Transverse colon (tissue), 4 donors: ENCODE measurements at regions of chr14 and their contacts with region 1.

Region 1: DNA sequence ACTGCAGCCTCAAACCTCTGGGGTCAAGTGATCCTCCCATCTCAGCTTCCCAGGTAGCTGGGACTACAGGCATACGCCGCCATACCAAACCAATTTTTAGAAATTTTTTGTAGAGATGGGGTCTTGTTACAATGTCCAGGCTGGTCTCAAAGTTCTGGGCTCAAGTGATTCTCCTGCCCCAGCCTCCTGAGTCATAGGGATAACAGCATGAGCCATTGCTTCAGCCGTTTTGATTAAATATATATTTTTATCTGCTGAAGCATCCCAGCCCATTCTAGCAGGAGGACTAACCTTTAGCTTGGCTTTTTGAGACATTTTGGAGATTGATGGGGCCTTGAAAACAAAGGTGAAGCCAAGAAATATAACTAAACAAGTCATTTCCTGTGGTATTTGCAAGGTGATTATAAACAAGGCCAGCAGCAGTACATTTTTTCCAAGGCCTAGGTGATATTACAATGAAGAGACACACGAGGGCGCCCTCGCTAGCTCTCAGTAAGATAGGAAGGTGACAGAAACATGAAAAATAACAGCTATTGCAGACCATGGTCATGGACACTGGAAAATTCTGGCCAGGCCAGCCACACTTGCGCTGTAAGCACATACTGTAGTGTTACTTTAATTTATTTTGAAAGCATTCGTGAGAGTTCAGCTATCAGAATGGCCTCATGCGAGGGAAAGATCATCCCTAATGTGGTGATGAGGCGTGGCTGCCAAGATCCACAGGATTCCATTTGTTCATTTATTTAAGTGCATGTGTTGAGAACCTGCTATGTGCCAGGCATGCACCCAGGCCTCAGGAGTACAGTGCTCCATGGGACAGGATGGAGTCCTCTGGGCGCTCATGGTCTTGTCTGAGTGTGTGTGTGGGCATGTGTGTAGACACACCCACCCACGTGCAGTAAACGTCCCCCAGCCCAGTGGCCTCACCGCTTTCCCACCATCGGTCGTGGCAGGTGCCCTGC is 63.5 kb downstream of the DGLUCY start:
- DNase-seq: peak; percentile 62
- H3K4me3 ChIP-seq: no peak overlapping the region
- H3K27ac ChIP-seq: peak overlapping the region in 2 of 4 donors; percentile 26 to 42
- H3K4me1 ChIP-seq: peaks cover 0 to 18% (median 8%) of the 10 kb centered on the region in 4 donors
- H3K27me3 ChIP-seq: no peaks in the 10 kb centered on the region
- CTCF ChIP-seq: peak; percentile 69 to 78 (median 77)
- EP300 ChIP-seq: no peak
- POLR2A ChIP-seq: no peak

Region 2: GRCh38 chr14:90894241-90894640 is 283.1 kb before region 1 on chr14:
- in situ Hi-C with region 1: loop called in 1 of 4 experiments (anchors 10 kb)
- intact Hi-C with region 1: no loop called
- DNase-seq: no peak
- H3K4me3 ChIP-seq: no peak overlapping the region
- H3K27ac ChIP-seq: no peak overlapping the region
- H3K4me1 ChIP-seq: peaks cover 0 to 5% (median 1%) of the 10 kb centered on the region in 4 donors
- H3K27me3 ChIP-seq: no peaks in the 10 kb centered on the region
- CTCF ChIP-seq: no peak
- EP300 ChIP-seq: no peak
- POLR2A ChIP-seq: no peak

Region 3: DNA sequence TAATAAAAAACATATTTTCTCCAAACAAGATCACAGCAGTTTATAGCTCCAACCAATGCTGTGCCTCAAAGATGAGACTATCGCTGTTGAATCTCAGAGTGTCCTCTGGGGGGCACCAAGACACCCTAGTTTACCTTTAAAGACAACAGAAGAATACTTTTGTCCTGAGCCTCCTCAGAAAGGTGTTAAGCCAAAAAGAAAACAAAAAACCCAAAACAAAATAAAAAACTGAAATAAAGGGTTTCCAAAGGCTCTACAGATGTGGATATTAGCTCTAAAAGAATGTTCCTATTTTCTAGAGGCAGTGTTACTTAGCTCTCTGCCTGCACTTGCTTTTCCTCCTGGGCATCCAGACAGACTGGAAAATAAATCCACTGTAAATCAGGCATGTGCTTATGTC is 274.3 kb before region 1 on chr14:
- in situ Hi-C with region 1: loop called (anchors 5 to 10 kb)
- intact Hi-C with region 1: loop called (anchors 2 kb)
- DNase-seq: peak; percentile 69
- H3K4me3 ChIP-seq: no peak overlapping the region
- H3K27ac ChIP-seq: no peak overlapping the region
- H3K4me1 ChIP-seq: peaks cover 0 to 5% (median 2%) of the 10 kb centered on the region in 4 donors
- H3K27me3 ChIP-seq: no peaks in the 10 kb centered on the region
- CTCF ChIP-seq: peak; percentile 65 to 78 (median 69)
- EP300 ChIP-seq: no peak
- POLR2A ChIP-seq: no peak

Region 4: DNA sequence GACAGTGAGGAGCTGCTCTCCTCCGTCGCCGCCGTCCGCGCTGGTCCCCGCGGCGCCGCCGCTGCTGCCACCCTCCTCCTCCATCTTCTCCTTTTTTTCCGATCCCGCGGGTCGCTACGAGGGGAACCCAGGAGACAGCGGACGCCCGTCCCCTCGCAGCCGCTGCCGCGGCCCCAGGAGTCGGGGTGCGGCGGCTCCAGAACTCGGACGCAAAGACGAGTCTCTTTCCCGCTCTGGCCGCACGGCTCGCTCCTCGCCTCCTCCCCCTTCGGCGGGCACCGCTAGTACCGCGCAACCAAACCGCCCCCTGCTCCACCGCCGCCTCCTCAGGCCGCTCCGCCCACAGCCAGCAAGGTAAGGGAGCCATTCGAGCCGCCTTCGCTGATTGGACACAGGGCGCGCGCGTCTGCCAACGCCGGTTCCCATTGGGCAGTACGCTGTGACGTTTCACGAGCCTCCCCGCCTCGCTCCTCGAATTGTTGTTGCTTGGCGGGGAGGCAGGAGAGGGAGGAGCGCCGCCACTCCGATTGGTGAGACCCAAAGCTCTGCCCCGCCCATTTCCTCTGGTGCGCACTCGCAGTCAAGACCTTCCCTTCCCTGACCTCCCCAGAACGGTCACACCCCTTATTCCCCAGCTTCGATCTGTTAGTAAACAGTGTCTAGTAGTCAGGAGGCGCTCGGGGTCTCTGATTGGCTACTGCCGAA is 116.9 kb before region 1 on chr14 and contains the start of gene RPS6KA5:
- in situ Hi-C with region 1: no loop called
- intact Hi-C with region 1: loop called (anchors 10 kb)
- DNase-seq: peak; percentile 100
- H3K4me3 ChIP-seq: peak within 1 kb of the TSS; percentile 86 to 96 (median 94)
- H3K27ac ChIP-seq: peak within 1 kb of the TSS; percentile 97 to 100 (median 99)
- H3K4me1 ChIP-seq: peaks cover 0 to 44% (median 20%) of the 10 kb centered on the region in 4 donors
- H3K27me3 ChIP-seq: no peaks in the 10 kb centered on the region
- CTCF ChIP-seq: peak in 4 of 5 experiments; percentile 22 to 74 (median 46)
- EP300 ChIP-seq: no peak
- POLR2A ChIP-seq: peak; percentile 92
- total RNA-seq, gene RPS6KA5: 7.5 to 32.8 (median 28.0) TPM

Region 5: GRCh38 chr14:91207008-91207407 is 29.7 kb after region 1 on chr14:
- in situ Hi-C with region 1: no loop called
- intact Hi-C with region 1: loop called (anchors 2 kb)
- DNase-seq: no peak
- H3K4me3 ChIP-seq: no peak overlapping the region
- H3K27ac ChIP-seq: no peak overlapping the region
- H3K4me1 ChIP-seq: peaks cover 0 to 5% (median 0%) of the 10 kb centered on the region in 4 donors
- H3K27me3 ChIP-seq: no peaks in the 10 kb centered on the region
- CTCF ChIP-seq: no peak
- EP300 ChIP-seq: no peak
- POLR2A ChIP-seq: no peak

Region 6: GRCh38 chr14:91286530-91286937 is 109.2 kb after region 1 on chr14:
- in situ Hi-C with region 1: loop called (anchors 5 to 10 kb)
- intact Hi-C with region 1: loop called (anchors 5 kb)
- DNase-seq: peak; percentile 77
- H3K4me3 ChIP-seq: no peak overlapping the region
- H3K27ac ChIP-seq: no peak overlapping the region
- H3K4me1 ChIP-seq: peaks cover 0 to 14% (median 6%) of the 10 kb centered on the region in 4 donors
- H3K27me3 ChIP-seq: no peaks in the 10 kb centered on the region
- CTCF ChIP-seq: peak; percentile 86 to 91 (median 89)
- EP300 ChIP-seq: no peak
- POLR2A ChIP-seq: no peak